Thyroid gland (tissue), 4 donors: ENCODE measurements at regions of chr11 and their contacts with region 1.

Region 1: DNA sequence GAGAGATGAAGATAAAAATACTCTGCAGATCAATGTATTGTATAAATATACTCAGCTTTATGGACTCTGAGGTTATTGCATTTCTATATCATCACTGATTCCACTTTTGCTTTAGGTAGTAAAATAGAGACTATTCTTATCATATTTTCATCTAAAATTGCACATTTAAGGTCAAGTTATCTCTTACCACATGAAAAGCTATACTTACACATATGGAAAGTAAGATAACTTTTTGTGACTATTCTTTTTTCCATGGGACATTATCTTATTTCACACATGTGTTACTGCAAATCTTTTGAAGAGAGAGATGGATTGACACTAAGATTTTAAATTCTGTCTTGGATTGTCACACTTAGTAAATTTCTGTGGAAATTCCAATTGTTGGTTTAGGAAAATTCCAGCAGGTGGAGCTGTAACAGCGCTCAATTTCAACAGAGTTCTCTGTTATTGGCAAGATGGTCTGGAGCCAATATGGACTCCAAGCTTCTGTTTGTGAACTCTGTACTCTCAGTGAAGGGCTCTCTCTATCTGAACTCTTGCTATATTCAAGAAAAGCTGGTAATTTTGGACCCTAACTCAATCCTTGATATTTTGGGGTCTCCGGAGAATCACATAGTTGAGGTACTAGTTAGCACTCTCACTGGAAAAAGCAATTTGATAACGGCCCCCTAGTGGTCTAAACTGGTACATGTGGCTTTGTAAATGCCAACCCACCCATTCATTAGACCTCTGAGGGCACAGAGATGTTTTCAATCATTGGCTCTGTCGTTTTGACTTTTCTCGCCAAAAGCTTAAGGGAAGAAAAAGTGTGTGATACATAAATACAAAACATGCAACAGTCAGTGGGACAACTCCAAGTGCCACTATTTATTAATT is 429.7 kb downstream of the ETS1 start:
- DNase-seq: peak; percentile 17 to 27
- H3K4me3 ChIP-seq: no peak overlapping the region
- H3K27ac ChIP-seq: peak overlapping the region in 1 of 3 donors; percentile 41
- H3K4me1 ChIP-seq: peaks cover 9 to 17% of the 10 kb centered on the region in 2 donors
- H3K27me3 ChIP-seq: no peaks in the 10 kb centered on the region
- CTCF ChIP-seq: peak; percentile 57 to 91 (median 78)
- POLR2A ChIP-seq: no peak

Region 2: DNA sequence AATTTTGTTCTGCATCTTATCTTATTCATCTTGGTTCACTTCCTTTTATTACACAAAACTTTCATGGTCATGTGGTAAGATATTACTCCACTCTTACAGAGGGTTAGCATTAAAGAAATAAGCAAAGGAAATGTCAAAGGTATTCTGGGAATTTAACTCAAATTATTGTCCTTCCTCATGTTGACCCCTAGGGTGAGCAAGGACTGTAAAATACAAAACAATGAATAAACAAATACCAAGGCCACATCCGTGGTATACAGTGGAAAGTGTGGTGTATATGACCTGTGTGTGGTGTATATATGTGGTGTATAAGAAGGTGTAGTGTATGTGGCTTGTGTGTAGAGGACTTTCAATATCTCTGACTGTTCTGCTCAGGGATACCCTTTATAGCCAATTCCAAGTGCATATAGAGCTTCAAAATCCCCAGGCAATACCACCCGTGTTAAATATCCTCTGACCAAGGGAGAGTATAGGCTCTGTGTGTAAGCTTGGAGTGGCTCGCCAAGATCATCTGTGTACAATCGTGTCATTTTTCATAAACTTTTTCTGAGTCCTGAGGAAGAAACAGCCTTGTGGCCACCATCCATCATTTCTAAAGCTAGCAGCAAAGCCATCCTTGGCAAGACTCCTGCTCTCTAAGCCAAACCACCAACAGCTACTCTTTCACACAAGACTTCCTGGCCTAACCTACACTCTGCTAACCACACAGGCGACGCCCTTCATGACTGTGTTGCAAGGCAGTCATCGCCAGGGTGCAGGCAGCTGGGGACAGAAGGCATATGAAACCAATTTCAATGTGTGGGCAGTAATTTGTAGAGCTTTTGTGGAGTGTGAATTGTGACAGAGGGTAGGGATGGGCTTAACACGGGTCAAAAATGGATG is 118.3 kb before region 1 on chr11:
- intact Hi-C with region 1: loop called (anchors 10 kb)
- DNase-seq: peak; percentile 33 to 60
- H3K4me3 ChIP-seq: no peak overlapping the region
- H3K27ac ChIP-seq: no peak overlapping the region
- H3K4me1 ChIP-seq: peaks cover 14 to 23% of the 10 kb centered on the region in 2 donors
- H3K27me3 ChIP-seq: no peaks in the 10 kb centered on the region
- CTCF ChIP-seq: no peak
- POLR2A ChIP-seq: no peak